AG04450 (cell line): ENCODE measurements at regions of chr7 and their contacts with region 1.

Region 1: DNA sequence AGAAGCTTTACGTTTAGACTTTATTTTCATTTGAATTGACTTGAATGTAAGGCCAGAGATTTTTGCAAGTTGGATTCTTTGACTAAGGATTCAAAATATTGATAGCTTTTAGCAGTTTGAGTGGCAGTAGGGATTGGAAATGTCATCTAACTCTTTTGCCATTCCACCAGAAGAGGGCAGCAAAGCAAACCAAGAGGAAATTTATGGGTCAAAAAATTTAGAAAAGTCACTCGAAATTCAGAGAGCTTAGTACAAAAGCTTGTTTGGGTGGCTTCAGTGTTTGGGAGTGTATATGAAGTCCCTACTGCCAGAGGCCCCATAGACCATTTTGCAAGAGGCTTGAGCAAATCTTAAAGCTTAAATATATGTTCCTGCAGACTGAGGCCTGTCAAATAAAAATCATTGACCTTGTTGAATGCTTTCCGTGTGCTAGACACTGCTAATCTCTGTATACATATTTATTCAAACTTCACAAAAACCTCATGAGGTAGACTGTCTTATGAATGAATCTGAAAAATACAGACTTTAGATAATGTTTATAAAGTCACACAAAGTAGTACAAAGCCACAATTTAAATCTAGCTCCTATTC is 44.6 kb upstream of the RSBN1L start:
- DNase-seq: no peak
- H3K4me3 ChIP-seq: no peak overlapping the region
- H3K27ac ChIP-seq: no peak overlapping the region
- H3K27me3 ChIP-seq: no peaks in the 10 kb centered on the region
- CTCF ChIP-seq: peak; percentile 77

Region 2: DNA sequence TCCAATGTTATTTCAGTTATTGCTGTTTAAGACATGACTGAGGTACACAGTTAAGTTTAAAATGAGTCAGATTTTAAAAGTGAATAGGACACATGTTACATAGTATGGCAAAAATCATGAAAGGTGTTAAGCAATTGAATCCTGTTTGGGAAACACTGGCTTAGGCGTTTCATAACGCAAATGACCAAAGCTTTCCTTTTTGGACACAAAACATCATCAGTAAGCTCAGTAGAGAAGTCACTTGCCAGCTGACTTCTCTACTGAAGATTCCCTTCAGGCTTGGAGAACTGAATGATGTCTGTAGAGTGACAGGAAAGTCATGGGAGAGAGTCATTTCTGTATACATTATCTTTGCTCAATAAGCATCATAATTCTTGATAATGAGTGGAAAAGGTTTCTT is 19.8 kb before region 1 on chr7:
- CTCF ChIA-PET with region 1: interaction called, 21 read pairs
- POLR2A ChIA-PET with region 1: no interaction called
- DNase-seq: no peak
- H3K4me3 ChIP-seq: no peak overlapping the region
- H3K27ac ChIP-seq: no peak overlapping the region
- H3K27me3 ChIP-seq: no peaks in the 10 kb centered on the region
- CTCF ChIP-seq: no peak

Region 3: DNA sequence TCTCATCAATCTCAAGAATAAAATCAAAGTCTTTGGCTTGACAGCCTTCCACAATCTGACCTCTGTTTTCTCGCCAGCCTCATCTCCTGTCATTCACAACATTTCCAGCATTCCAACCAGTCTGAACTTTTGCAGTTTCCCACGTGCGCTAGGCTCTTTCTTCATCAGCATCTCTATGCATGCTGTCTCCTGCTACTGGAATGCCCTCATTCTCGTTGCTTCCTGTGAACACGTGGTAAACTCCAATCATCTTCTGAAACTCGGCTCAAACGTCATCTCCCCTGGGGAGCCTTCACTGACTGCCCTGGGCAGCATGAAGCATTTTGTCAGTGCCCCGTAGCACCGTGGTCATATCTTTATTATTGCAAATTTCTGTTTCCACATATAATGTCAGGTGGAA is 32.4 kb after region 1 on chr7:
- CTCF ChIA-PET with region 1: interaction called, 11 read pairs
- POLR2A ChIA-PET with region 1: no interaction called
- DNase-seq: no peak
- H3K4me3 ChIP-seq: no peak overlapping the region
- H3K27ac ChIP-seq: no peak overlapping the region
- H3K27me3 ChIP-seq: no peaks in the 10 kb centered on the region
- CTCF ChIP-seq: no peak

Region 4: GRCh38 chr7:77759294-77759889 is 107.7 kb after region 1 on chr7:
- CTCF ChIA-PET with region 1: interaction called, 116 read pairs
- POLR2A ChIA-PET with region 1: no interaction called
- DNase-seq: peak; percentile 50
- H3K4me3 ChIP-seq: no peak overlapping the region
- H3K27ac ChIP-seq: no peak overlapping the region
- H3K27me3 ChIP-seq: no peaks in the 10 kb centered on the region
- CTCF ChIP-seq: peak; percentile 80

Region 5: DNA sequence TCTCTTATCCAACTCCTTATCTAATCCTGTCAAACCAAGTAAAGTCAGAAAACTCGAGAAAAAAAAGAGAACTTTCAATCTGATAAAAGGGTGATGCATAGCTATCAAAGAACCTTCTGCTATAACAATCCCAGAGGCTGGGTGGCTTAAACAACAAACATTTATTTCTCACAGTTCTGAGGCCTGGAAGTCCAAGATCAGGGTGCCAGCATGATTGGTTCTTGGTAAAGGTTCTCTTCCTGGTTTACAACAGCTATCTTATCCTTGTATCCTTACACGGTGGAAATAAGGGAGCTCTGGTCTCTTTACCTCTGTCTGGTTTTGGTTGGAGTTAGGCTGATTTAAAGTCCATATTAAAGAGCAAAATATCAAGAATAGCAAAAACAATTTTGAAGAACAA is 278.8 kb after region 1 on chr7:
- CTCF ChIA-PET with region 1: interaction called, 17 read pairs
- POLR2A ChIA-PET with region 1: no interaction called
- DNase-seq: no peak
- H3K4me3 ChIP-seq: no peak overlapping the region
- H3K27ac ChIP-seq: no peak overlapping the region
- H3K27me3 ChIP-seq: no peaks in the 10 kb centered on the region
- CTCF ChIP-seq: no peak